HCT116 (cell line): ENCODE measurements at regions of chr2 and their contacts with region 1.

Region 1: DNA sequence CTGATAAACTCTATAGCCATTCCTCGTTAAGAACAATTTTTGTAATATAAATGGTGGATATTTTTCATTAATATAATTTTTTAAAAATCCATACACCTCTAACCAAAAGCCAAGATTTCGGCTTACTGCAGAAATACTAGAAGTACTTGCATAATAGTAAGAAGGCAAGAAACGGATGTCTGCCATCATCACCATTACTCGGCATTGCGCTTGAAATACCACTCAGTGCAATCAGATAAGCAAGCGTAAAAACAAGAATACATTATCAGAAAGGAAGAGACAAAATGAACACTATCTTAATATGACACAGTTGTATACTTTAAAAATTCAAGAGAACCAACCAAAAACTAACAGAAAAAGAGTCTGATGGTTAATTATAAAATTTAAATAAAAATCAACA is 15.2 kb upstream of the BOLA3 start:
- DNase-seq: no peak
- ATAC-seq: no peak
- H3K4me3 ChIP-seq: no peak overlapping the region
- H3K27ac ChIP-seq: no peak overlapping the region
- H3K4me1 ChIP-seq: no peaks in the 10 kb centered on the region
- H3K27me3 ChIP-seq: no peaks in the 10 kb centered on the region
- CTCF ChIP-seq: no peak
- POLR2A ChIP-seq: no peak
- RAD21 ChIP-seq: no peak

Region 2: DNA sequence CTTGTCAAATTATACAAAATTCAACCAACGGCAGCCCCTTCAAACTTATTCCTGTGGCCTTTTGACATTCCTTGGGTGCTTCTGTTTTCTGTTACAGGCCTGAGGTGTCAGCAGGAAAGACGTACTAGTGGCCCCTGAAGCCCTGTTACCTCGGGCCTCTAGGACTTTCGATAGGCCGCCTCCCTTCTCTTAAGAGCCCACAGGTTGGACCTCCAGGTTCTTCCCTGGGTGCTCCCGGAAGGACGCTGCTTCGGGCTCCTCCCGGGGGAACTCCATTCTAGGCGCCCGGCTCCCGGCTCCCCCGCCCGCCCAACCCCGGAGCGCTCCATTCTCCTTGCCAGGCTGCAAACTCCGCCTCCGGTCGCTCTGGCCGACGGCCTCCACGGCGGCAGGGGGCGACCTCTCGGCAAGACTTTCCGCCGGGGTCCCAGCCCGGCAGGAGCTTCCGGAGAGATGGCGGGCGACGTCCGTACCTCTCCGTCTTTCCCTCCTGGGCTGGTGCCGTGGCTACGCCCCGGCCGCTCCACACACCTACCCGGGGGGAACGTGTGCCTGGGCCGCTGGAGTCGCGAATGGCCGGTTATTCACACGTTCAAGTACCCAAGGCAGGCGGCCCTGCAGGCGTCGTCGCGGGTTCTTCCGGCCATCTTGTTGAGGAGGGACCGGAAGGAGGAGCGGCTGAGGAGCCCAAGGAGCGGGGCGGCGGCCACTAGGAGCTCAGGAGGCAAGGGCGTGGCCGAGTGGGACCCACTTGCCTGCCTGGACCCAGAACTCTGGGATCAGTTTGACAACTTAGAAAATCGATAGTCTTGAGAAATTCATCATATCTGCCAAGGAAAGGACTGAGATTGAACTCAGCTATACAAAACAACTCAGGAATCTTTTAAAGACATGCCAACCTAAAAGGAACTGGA is 42.8 kb before region 1 on chr2:
- CTCF ChIA-PET with region 1: no interaction called
- POLR2A ChIA-PET with region 1: no interaction called
- RAD21 ChIA-PET with region 1: no interaction called
- intact Hi-C with region 1: loop called (anchors 1 kb)
- DNase-seq: no peak
- ATAC-seq: no peak
- H3K4me3 ChIP-seq: no peak overlapping the region
- H3K27ac ChIP-seq: no peak overlapping the region
- H3K4me1 ChIP-seq: no peaks in the 10 kb centered on the region
- H3K27me3 ChIP-seq: no peaks in the 10 kb centered on the region
- CTCF ChIP-seq: no peak
- POLR2A ChIP-seq: no peak
- RAD21 ChIP-seq: no peak

Region 3: GRCh38 chr2:74345272-74345943 is 182.5 kb after region 1 on chr2:
- CTCF ChIA-PET with region 1: no interaction called
- POLR2A ChIA-PET with region 1: no interaction called
- RAD21 ChIA-PET with region 1: no interaction called
- intact Hi-C with region 1: no loop called
- DNase-seq: no peak
- ATAC-seq: no peak
- H3K4me3 ChIP-seq: no peak overlapping the region
- H3K27ac ChIP-seq: no peak overlapping the region
- H3K4me1 ChIP-seq: no peaks in the 10 kb centered on the region
- H3K27me3 ChIP-seq: no peaks in the 10 kb centered on the region
- CTCF ChIP-seq: no peak
- POLR2A ChIP-seq: no peak
- RAD21 ChIP-seq: no peak